Activated CD8-positive, alpha-beta memory T cell treated with anti-CD3 and anti-CD28 coated beads, Interleukin-2, amount 10 ng/mL, durations not matched to agents 7 days and 5 days (primary cell): ENCODE measurements at regions of chr11 and their contacts with region 1.

Region 1: DNA sequence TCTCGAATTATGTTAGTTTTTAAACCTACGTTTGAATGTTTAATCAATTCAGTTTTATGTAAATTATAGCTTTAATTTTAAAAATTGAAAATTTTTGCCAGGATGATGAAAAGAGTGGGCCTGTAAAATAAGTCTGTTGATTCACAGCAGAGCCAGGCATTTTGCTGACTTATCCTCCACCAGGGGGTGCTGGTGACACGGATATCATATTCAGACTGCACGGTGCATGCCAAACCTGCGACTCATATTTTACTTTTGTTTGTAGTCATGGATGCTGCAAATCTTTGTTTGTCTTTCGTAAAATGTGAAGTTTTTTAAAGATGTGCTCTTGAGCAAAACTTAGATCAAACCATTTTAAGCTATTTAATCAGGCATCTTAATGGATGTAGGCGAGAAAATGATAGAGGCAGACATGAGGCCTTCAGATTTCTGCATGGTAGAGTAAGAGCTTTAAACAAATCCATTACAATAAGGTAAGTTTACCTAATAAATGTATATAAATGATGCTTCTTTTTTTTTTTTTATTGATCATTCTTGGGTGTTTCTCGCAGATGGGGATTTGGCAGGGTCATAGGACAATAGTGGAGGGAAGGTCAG is 3.6 kb upstream of the OR8B3 start:
- DNase-seq: peak; percentile 66
- ATAC-seq: peak; percentile 74
- H3K4me3 Mint-ChIP-seq: no peak overlapping the region
- H3K27ac Mint-ChIP-seq: no peak overlapping the region
- H3K4me1 Mint-ChIP-seq: peaks cover 2% of the 10 kb centered on the region
- H3K27me3 Mint-ChIP-seq: peaks cover 5% of the 10 kb centered on the region

Region 2: DNA sequence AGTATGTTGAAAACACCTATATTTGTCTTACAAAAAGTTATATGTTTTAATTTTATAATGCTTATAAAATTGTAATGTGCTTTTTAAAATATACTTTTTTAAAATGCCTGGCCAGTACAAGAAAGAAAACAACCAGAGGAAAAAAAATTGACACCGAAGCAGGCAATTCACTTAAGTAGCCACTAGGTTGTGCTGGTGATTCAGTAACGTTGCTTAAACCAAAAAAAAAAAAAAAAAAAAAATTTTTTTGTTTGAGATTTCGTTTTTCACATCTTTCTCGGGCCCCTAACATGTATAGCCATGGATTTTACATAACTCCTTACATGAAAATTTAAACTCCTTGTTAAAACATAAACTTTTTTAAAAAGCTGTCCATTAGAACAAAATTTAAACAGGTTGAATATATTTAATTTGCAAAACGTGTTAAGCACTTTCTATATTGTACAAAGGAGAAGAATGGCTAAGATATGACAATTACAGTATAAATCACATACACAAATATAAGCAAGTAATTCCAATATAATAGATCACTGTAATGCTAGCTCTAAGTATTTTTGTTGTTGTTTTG is 13.0 kb after region 1 on chr11:
- CTCF ChIA-PET with region 1: interaction called, 10 read pairs
- DNase-seq: no peak
- ATAC-seq: no peak
- H3K4me3 Mint-ChIP-seq: no peak overlapping the region
- H3K27ac Mint-ChIP-seq: no peak overlapping the region
- H3K4me1 Mint-ChIP-seq: no peaks in the 10 kb centered on the region
- H3K27me3 Mint-ChIP-seq: peaks cover 12% of the 10 kb centered on the region

Region 3: DNA sequence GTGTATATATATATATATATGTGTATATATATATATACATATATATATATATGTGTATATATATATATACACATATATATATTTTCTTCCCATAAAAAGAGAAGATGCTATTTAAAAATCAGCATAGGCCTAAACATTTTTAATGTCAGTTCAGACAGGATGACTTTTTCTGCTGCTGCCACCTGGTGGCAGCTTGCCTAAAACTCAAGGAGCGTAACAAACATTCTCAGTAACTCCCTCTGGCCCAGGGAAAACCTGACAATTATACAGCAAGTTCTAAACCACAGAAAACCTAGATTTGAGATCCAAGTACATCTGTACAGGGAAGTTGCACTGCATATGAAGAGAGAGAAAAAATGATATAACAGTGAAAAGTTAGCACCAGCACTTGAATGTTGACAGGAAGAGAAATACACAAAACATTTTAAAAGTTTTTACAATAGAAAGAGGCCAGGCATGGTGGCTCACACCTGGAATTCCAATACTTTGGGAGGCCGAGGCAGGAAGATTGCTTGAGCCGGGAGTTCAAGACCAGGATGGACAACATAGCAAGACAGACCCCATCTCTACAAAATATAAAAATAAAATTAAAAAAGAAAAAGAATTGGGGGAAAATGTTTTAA is 183.9 kb after region 1 on chr11:
- CTCF ChIA-PET with region 1: interaction called, 13 read pairs
- DNase-seq: peak; percentile 51
- ATAC-seq: no peak
- H3K4me3 Mint-ChIP-seq: no peak overlapping the region
- H3K27ac Mint-ChIP-seq: no peak overlapping the region
- H3K4me1 Mint-ChIP-seq: no peaks in the 10 kb centered on the region
- H3K27me3 Mint-ChIP-seq: peaks cover 12% of the 10 kb centered on the region

Region 4: DNA sequence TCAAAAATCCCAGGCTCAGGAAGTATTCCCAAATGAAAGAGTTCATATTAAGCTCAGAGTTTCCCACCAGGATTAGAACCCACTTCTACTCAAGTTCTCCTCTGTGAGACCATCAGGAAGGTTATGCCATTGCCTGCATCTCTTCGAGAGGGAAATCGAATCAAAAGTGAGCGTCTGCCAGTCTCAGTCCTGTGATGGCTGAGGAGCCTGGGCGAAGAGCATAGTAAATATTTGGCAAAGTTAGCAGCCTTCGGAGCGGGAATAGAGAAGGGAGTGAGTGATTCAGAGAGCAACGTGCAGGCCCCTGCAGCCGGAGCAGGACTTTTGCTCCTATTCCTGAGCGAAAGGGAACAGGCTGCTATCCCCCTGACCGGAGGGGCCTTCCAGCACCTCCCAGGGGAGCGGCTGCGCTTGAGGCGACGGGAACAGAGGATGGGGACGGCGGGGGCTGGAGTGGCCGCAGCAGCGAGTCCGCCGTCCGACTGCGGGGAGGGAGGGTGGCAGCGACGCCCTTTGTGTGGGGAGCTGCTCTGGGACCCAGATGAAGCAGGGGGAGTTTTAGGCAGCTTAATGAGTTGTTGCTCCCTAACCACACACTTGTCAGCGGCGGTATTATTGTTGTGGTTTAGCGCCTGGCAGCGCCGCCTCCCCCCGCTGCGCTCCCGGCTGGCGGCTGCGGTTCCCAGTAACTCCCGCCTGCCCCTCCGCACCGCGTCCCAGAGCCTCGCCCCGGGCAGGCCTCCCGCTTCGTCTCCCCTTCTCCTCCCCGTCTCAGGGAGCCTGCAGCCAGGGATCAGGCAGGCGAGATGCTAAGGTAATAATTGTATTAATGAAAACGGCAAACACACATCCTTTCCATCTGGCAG is 315.6 kb after region 1 on chr11:
- CTCF ChIA-PET with region 1: no interaction called
- DNase-seq: no peak
- ATAC-seq: peak; percentile 49
- H3K4me3 Mint-ChIP-seq: no peak overlapping the region
- H3K27ac Mint-ChIP-seq: no peak overlapping the region
- H3K4me1 Mint-ChIP-seq: peaks cover 11% of the 10 kb centered on the region
- H3K27me3 Mint-ChIP-seq: peaks cover 64% of the 10 kb centered on the region